ENCODE measurements at regions of chr7 and their contacts with region 1.

Region 1: GRCh38 chr7:111089822-111090426 is 1.0 kb upstream of the LRRN3 start:
- DNase-seq: peak in 1 of 42 donors; percentile 18

Region 2: GRCh38 chr7:111486472-111487142 is 396.7 kb after region 1 on chr7:
- intact Hi-C with region 1: loop called (anchors 5 kb)
- DNase-seq: peak in 15 of 42 donors; percentile 7 to 63 (median 30)

Measured in head of caudate nucleus (tissue), 42 donors.